Activated naive CD8-positive, alpha-beta T cell treated with anti-CD3 and anti-CD28 coated beads, Interleukin-2, amount 10 ng/mL, durations not matched to agents 7 days and 5 days (primary cell): ENCODE measurements at regions of chr12 and their contacts with region 1.

Region 1: DNA sequence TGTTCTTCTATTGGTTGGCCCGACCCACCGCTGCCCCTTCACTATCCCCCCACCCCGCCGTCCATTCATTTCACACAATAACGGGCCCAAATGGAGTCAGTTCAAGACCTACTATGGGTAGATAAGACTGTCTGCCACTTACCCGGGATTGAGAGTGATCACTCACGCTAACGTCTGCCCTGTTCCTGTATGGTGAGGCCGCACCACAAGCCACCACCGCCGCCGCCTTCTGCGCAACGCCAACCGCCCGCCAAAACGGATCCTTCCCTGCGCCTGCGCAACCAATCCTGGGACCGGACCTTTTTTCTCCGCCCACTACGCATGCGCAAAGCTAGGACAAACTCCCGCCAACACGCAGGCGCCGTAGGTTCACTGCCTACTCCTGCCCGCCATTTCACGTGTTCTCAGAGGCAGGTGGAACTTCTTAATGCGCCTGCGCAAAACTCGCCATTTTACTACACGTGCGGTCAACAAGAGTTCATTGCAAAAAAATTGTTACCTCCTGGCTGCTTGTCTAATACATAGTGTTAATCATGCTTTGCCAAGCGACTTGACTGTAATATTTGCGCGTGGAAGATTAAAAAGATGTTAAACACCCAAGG is at the start of gene CBX5:
- DNase-seq: peak; percentile 98
- ATAC-seq: peak; percentile 64
- H3K4me3 Mint-ChIP-seq: no peak within 1 kb of the TSS
- H3K27ac Mint-ChIP-seq: no peak within 1 kb of the TSS
- H3K4me1 Mint-ChIP-seq: peaks cover 44% of the 10 kb centered on the region
- H3K27me3 Mint-ChIP-seq: no peaks in the 10 kb centered on the region
- total RNA-seq, gene CBX5: 113 TPM

Region 2: DNA sequence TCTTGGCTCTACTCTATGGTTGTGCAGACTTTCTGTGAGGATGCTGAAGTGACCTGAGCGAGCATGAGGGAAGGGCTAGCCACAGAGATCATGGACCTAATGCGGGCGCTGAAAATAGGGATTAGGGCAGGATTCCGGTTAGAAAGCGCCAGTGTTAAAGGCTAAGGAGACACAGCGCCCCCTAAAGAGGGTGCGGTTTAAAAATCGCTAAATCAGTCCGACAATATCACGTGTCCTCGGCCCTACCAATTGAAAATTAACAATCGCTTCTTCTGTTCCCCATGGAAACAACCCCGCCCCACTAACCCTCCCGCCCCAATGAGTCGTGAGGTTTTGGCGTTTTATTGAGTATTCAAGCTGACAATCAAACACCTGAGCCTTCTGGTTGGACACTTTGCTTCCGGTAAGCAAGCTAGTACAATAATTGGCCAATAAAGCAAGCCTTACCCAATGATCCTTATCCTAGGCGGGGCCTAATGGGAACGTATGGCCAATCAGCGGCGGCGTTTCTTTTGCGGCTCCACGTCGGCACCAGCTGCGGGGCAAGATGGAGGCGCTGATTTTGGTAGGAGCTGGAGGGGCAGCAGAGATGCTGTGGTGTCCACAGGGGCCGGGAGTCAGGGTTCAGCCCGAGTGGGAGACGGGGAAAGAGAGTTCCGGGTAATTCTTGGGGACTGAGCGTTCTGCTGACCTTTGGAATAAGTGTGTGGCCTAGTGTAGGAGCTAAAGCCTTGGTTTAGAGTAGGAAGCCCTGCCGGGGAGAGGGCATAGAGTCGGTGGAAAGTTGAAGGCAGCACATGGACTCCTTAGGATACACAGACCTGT is 44.9 kb after region 1 on chr12 and contains the start of gene COPZ1:
- POLR2A ChIA-PET with region 1: interaction called, 20 read pairs
- DNase-seq: peak; percentile 88
- ATAC-seq: peak; percentile 99
- H3K4me3 Mint-ChIP-seq: peak within 1 kb of the TSS; percentile 96
- H3K27ac Mint-ChIP-seq: peak within 1 kb of the TSS; percentile 87
- H3K4me1 Mint-ChIP-seq: peaks cover 24% of the 10 kb centered on the region
- H3K27me3 Mint-ChIP-seq: no peaks in the 10 kb centered on the region
- total RNA-seq, gene COPZ1: 93.1 to 94.6 TPM